ENCODE measurements at regions of chr15 and their contacts with region 1.

Region 1: GRCh38 chr15:48360841-48361240 is 29.6 kb downstream of the DUT start:
- DNase-seq: no peak
- H3K4me3 ChIP-seq: no peak overlapping the region
- H3K27ac ChIP-seq: no peak overlapping the region
- H3K4me1 ChIP-seq: peaks cover 3 to 14% (median 6%) of the 10 kb centered on the region in 3 donors
- H3K27me3 ChIP-seq: no peaks in the 10 kb centered on the region
- CTCF ChIP-seq: no peak
- POLR2A ChIP-seq: no peak

Region 2: GRCh38 chr15:48469271-48469670 is 108.4 kb after region 1 on chr15:
- intact Hi-C with region 1: no loop called
- DNase-seq: no peak
- H3K4me3 ChIP-seq: no peak overlapping the region
- H3K27ac ChIP-seq: no peak overlapping the region
- H3K4me1 ChIP-seq: peaks cover 4 to 26% (median 6%) of the 10 kb centered on the region in 3 donors
- H3K27me3 ChIP-seq: no peaks in the 10 kb centered on the region
- CTCF ChIP-seq: no peak
- POLR2A ChIP-seq: no peak

Region 3: DNA sequence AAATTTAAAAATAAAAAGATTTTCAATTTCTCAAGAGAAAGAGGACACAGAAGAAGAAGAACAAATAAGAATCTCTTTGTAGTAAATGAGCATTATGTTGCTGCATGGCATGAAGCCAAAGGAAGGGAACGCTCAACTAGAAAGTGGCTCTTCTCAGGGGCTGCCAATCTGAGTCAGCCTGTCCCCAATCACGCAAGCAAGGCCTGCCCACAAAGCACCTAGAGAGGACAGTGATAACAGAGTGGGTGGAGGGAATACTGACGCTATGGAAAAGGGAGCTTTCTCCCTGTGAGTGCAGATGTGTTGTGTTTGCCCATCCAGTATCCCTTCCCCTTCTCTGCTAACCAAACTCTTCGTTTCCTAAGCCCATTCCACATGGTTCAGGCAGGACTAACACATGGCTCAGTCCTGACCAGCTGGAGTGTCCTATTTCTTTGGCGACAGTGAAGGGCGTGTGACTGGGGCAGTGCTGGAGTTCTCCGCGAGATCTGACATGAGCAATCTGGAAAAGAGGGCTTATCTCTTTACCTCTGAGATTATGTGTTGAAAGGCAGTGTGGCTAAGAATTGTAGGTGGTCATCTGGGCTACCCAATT is 270.4 kb after region 1 on chr15:
- intact Hi-C with region 1: loop called (anchors 10 kb)
- DNase-seq: no peak
- H3K4me3 ChIP-seq: no peak overlapping the region
- H3K27ac ChIP-seq: peak overlapping the region in 1 of 4 donors; percentile 8
- H3K4me1 ChIP-seq: peaks cover 0 to 35% (median 9%) of the 10 kb centered on the region in 3 donors
- H3K27me3 ChIP-seq: no peaks in the 10 kb centered on the region
- CTCF ChIP-seq: no peak
- POLR2A ChIP-seq: no peak

Measured in esophagus squamous epithelium (tissue), 5 donors.